Breast epithelium (tissue), 4 donors: ENCODE measurements at regions of chr3 and their contacts with region 1.

Region 1: DNA sequence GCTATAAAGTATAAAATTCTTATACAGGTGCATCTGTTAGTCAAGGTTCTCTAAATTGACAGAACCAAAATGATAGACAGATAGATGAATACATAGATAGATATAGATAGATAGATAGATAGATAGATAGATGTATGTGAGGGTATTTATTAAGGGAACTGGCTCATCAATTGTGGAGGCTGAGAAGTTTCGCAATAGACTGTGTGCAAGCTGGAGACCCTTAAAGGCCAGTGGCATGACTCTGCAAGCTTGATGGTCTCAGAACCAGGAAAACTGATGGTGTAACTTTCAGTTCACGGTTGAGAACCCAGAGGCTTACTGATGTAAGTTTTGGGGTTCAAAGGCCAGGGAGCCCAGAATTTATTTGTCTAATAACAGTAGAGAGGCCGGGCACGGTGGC is 1123.8 kb upstream of the CADM2 start:
- DNase-seq: no peak
- H3K4me3 ChIP-seq: no peak overlapping the region
- H3K27ac ChIP-seq: no peak overlapping the region
- H3K4me1 ChIP-seq: no peaks in the 10 kb centered on the region
- H3K27me3 ChIP-seq: no peaks in the 10 kb centered on the region
- CTCF ChIP-seq: no peak
- POLR2A ChIP-seq: no peak

Region 2: GRCh38 chr3:85148036-85148435 is 1313.0 kb after region 1 on chr3:
- intact Hi-C with region 1: loop called (anchors 10 kb)
- DNase-seq: no peak
- H3K4me3 ChIP-seq: no peak overlapping the region
- H3K27ac ChIP-seq: no peak overlapping the region
- H3K4me1 ChIP-seq: no peaks in the 10 kb centered on the region
- H3K27me3 ChIP-seq: no peaks in the 10 kb centered on the region
- CTCF ChIP-seq: no peak
- POLR2A ChIP-seq: no peak